Breast epithelium (tissue), 4 donors: ENCODE measurements at regions of chr16 and their contacts with region 1.

Region 1: GRCh38 chr16:22297114-22297878 is at the start of gene POLR3E:
- DNase-seq: peak; percentile 99
- H3K4me3 ChIP-seq: peak within 1 kb of the TSS; percentile 82 to 98 (median 92)
- H3K27ac ChIP-seq: peak within 1 kb of the TSS; percentile 95 to 97
- H3K4me1 ChIP-seq: peaks cover 3 to 9% of the 10 kb centered on the region in 2 donors
- H3K27me3 ChIP-seq: no peaks in the 10 kb centered on the region
- CTCF ChIP-seq: peak; percentile 96 to 99 (median 98)
- POLR2A ChIP-seq: no peak
- total RNA-seq, gene POLR3E: 59.0 to 72.4 (median 64.0) TPM

Region 2: DNA sequence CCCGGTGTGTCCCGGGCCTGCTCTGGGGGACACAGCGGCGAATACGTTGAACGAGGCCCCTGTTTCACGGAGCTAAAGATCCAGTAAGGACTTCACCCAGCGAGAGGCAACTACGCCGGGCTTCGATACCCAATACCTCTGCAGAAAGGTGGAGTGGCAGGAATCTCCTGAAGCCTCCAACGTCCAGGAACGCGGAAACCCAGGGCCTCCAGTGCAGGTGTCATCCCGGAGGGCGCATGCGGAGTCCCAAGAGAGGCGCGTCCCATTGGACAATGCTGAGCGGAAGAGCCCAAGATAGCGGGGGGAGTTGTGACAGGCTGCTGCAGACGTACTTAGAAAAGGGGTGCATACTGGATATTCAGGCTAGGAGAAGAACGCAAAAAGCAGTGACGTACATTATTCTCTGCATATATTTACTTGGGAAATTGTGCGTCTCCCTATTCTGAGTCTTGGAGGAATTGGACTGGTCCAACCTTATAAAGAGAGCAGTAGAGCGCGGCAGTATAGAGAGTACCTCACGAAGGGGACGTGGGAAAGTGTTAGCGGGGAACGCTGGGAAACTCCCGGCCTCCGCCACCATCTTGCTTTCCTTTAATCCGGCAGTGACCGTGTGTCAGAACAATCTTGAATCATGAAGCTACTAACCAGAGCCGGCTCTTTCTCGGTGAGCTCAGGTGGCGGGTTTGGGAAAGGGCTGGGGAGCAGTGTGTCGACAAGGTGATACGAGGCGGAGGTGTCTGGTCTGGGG is 344.3 kb before region 1 on chr16 and contains the start of gene UQCRC2:
- intact Hi-C with region 1: loop called (anchors 5 kb)
- DNase-seq: peak; percentile 88
- H3K4me3 ChIP-seq: peak within 1 kb of the TSS; percentile 69 to 92 (median 81)
- H3K27ac ChIP-seq: peak within 1 kb of the TSS; percentile 91 to 95
- H3K4me1 ChIP-seq: peaks cover 0 to 23% of the 10 kb centered on the region in 2 donors
- H3K27me3 ChIP-seq: no peaks in the 10 kb centered on the region
- CTCF ChIP-seq: no peak
- POLR2A ChIP-seq: no peak
- total RNA-seq, gene UQCRC2: 142 to 177 (median 173) TPM

Region 3: GRCh38 chr16:22007509-22008214 is 289.6 kb before region 1 on chr16 and contains the start of gene MOSMO:
- intact Hi-C with region 1: loop called (anchors 10 kb)
- DNase-seq: peak; percentile 40 to 66
- H3K4me3 ChIP-seq: peak within 1 kb of the TSS; percentile 85 to 96 (median 95)
- H3K27ac ChIP-seq: peak within 1 kb of the TSS; percentile 80 to 91
- H3K4me1 ChIP-seq: no peaks in the 10 kb centered on the region
- H3K27me3 ChIP-seq: no peaks in the 10 kb centered on the region
- CTCF ChIP-seq: no peak
- POLR2A ChIP-seq: no peak
- total RNA-seq, gene MOSMO: 19.7 to 31.5 (median 29.5) TPM

Region 4: DNA sequence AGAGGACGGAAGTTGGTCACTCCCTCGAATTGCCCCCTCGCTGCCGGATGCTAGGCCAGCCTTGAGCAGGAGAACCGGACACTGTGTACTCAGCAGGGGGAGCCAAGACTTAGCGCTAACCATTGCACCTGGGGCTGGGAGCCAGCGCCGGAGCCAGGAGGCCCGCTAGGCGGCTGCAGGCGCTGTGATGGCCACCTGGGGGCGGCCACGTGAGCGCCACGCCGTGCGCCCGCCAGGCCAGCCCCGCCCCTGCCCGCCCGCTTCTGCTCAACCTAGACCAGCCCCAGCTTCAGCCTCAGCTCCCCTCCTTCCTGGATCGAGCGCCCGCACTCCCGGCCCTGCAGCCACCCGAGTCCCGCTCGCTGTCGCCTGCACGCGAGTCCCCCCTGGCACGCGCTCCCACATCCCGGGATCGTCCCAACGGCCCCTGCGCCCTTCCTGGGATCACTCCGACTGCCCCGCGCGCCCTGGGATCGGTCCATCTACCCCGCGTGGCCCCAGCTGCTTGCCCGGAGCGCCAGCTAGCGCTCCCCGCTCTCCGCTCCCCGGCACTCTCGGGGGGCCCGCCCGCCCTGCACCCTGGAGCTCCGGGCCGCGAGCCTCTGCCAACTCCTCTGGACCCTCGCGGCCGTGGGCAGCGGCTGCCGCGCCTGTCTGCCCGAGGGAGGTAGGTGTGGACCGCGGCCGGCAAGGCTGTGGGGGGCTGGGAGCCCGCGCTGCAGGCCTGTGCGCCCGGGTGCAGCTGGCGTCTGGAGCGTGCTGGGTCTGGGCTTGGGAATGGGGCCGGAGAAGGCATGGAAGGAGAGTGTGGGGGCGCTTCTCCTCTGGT is 91.1 kb before region 1 on chr16 and contains the start of gene EEF2K:
- intact Hi-C with region 1: loop called (anchors 5 kb)
- DNase-seq: peak; percentile 88 to 91
- H3K4me3 ChIP-seq: peak within 1 kb of the TSS; percentile 79 to 94 (median 92)
- H3K27ac ChIP-seq: peak within 1 kb of the TSS; percentile 80 to 91
- H3K4me1 ChIP-seq: peaks cover 0 to 12% of the 10 kb centered on the region in 2 donors
- H3K27me3 ChIP-seq: no peaks in the 10 kb centered on the region
- CTCF ChIP-seq: peak; percentile 71 to 91 (median 81)
- POLR2A ChIP-seq: no peak
- total RNA-seq, gene EEF2K: 23.3 to 40.5 (median 30.0) TPM

Region 5: DNA sequence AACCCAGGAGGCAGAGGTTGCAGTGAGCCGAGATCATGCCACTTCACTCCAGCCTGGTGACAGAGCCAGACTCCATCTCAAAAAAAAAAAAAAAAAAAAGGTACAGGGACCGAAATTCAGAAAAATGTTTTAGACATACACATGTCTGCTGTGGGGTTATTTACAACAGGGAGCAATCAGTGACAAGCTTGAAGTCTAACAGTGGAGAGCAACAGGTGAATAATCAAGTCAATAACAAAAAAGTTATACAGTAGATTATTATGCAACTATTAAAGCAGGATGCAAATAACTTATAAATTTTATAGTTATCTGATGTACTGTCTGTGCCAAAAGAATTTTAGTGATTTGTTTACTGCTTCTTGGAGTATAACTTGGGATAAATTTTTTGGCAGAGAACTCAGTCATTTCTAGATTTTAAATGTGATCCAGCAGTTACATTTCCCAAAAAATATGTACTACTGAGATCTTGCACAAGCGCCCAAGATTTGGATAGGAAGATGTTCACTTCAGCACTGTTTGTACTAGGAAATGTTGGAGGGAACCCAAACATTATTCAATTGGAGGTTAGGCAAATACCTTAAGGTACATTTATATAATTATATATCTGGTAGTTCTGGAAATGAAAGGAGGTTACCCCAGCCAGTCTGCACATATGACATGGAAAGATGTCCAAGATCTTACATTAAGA is 57.1 kb before region 1 on chr16:
- intact Hi-C with region 1: no loop called
- DNase-seq: no peak
- H3K4me3 ChIP-seq: no peak overlapping the region
- H3K27ac ChIP-seq: peak overlapping the region; percentile 59 to 70
- H3K4me1 ChIP-seq: peaks cover 4 to 9% of the 10 kb centered on the region in 2 donors
- H3K27me3 ChIP-seq: no peaks in the 10 kb centered on the region
- CTCF ChIP-seq: no peak
- POLR2A ChIP-seq: no peak

Region 6: GRCh38 chr16:22284637-22285036 is 12.7 kb before region 1 on chr16:
- intact Hi-C with region 1: no loop called
- DNase-seq: no peak
- H3K4me3 ChIP-seq: no peak overlapping the region
- H3K27ac ChIP-seq: no peak overlapping the region
- H3K4me1 ChIP-seq: no peaks in the 10 kb centered on the region
- H3K27me3 ChIP-seq: no peaks in the 10 kb centered on the region
- CTCF ChIP-seq: no peak
- POLR2A ChIP-seq: no peak

Region 7: GRCh38 chr16:22353191-22353919 is 56.1 kb after region 1 on chr16:
- intact Hi-C with region 1: no loop called
- DNase-seq: no peak
- H3K4me3 ChIP-seq: no peak overlapping the region
- H3K27ac ChIP-seq: peak overlapping the region in 1 of 2 donors; percentile 57
- H3K4me1 ChIP-seq: no peaks in the 10 kb centered on the region
- H3K27me3 ChIP-seq: no peaks in the 10 kb centered on the region
- CTCF ChIP-seq: no peak
- POLR2A ChIP-seq: no peak